ENCODE measurements at regions of chr1 and their contacts with region 1.

Region 1: DNA sequence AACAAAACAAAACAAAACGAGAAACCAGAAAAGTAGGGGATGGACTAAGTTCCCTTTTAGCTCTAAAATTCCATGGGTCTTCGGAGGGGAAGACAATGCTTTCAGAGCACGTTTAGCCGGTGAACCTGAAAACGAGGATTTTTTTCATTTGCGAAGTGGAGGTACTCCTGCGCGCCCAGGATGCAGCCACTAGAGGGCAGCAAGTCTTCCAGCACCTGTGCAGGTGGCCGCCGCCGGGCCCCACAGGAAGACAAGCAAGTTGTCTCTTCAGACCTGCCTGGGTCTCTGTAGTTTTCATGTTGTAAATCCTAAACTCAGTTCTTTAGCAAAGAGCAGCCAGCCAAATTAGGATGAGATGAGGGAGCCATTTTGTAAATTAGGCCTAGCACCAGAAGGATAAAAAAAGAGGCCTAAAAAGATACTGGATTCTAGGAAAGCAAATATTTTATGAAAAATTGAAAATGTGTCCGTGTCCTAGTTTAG is 17.7 kb upstream of the SNX27 start:
- DNase-seq: peak; percentile 83

Region 2: GRCh38 chr1:151533870-151534269 is 60.3 kb before region 1 on chr1:
- CTCF ChIA-PET with region 1: no interaction called
- POLR2A ChIA-PET with region 1: no interaction called
- DNase-seq: no peak

Region 3: GRCh38 chr1:151581952-151582351 is 12.2 kb before region 1 on chr1:
- CTCF ChIA-PET with region 1: interaction called, 11 read pairs
- POLR2A ChIA-PET with region 1: interaction called, 3 read pairs
- DNase-seq: no peak

Region 4: GRCh38 chr1:151692226-151692625 is 98.0 kb after region 1 on chr1:
- CTCF ChIA-PET with region 1: no interaction called
- POLR2A ChIA-PET with region 1: no interaction called
- DNase-seq: no peak

Region 5: DNA sequence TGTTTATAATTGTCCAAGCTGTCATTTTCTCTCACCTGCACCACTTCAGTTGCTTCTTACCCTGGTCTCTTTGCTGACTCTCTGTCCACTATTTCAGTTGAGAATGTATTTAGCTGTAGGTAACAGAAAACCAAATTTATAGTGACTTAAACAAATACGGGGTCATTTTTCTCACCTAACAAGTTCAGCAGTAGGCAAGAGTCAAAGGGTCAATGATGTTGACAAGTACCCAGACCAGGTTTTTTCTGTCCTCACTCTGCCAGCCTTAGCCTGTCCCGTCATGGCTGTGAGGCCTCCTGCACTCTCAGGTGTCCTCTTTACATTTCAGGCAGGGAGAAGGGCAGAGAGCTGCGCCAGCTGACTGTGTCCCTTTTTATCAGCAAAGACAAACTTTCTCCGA is 138.9 kb after region 1 on chr1:
- CTCF ChIA-PET with region 1: interaction called, 16 read pairs
- POLR2A ChIA-PET with region 1: no interaction called
- DNase-seq: no peak